CD8-positive, alpha-beta T cell (primary cell): ENCODE measurements at regions of chrX and their contacts with region 1.

Region 1: DNA sequence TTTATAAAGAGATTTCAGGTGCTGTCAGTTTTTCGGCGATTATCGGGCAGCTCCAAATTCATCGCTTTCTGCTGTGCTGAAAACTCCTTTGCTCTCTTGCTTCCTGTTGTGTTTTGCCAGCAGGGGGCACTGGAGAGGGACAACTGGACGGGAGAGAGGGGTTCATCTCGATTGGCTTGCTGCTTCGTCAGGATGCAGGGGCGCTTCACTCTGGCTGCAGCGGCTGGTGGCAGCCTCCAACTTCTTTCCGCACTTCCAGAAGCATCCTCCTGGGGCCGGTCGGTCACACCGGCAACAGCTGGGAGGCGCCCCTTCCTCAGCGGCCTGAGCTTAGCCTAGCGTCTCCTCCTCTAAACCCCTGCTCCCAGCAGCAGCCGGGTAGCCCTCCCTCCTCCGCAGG is 29.5 kb downstream of the MSL3 start:
- DNase-seq: peak; percentile 38 to 80 (median 66)
- ATAC-seq: peak; percentile 79
- H3K4me3 ChIP-seq: peak overlapping the region; percentile 34 to 35
- H3K4me3 Mint-ChIP-seq: peak overlapping the region; percentile 76
- H3K27ac ChIP-seq: no peak overlapping the region
- H3K27ac Mint-ChIP-seq: peak overlapping the region; percentile 60
- H3K4me1 ChIP-seq: peaks cover 19% of the 10 kb centered on the region
- H3K4me1 Mint-ChIP-seq: peaks cover 19% of the 10 kb centered on the region
- H3K27me3 ChIP-seq: no peaks in the 10 kb centered on the region
- H3K27me3 Mint-ChIP-seq: no peaks in the 10 kb centered on the region
- CTCF ChIP-seq: peak; percentile 46

Region 2: DNA sequence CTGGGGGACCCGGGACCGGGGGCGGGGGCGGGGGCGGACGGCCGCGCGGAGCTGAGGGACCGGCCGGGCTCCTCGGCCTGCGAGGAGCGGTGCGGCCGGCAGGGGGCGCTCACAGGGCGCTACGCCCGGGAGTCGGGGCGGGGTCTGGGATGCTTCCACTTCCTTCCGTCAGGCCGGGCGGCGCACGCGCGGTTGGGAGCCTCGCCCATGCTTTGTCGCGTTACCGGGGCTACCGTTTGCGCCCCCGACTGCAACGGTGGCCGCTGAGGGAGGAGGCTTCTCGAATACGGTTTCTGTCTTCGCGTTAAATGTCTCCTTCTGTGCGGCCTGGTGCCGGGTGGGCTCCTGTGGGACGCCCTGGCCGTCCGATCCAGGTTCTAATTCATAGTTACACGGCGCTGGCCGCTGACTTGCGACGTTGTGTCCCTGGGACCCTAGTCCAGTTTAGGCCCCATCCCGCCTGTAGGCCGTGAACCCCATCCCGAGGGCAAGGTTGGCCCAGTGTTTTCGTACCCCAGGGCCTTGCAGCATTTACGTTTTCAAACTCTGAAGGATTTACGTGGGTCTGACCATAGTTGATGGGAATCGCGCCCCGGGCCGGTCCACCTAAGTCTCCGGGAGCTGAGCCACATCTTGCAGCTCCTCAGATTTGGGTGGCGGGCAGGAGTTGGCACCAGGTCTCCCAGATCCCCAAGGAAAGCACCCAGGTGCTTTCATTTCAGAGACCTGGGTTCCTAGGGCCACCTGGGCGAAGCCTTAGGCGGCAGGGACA is 29.0 kb before region 1 on chrX:
- CTCF ChIA-PET with region 1: interaction called, 10 read pairs
- POLR2A ChIA-PET with region 1: no interaction called
- intact Hi-C with region 1: no loop called
- DNase-seq: peak; percentile 76 to 93 (median 89)
- ATAC-seq: peak; percentile 61
- H3K4me3 ChIP-seq: peak overlapping the region; percentile 76 to 91
- H3K4me3 Mint-ChIP-seq: peak overlapping the region; percentile 88
- H3K27ac ChIP-seq: peak overlapping the region; percentile 87 to 93
- H3K27ac Mint-ChIP-seq: peak overlapping the region; percentile 97
- H3K4me1 ChIP-seq: peaks cover 18% of the 10 kb centered on the region
- H3K4me1 Mint-ChIP-seq: peaks cover 34% of the 10 kb centered on the region
- H3K27me3 ChIP-seq: no peaks in the 10 kb centered on the region
- H3K27me3 Mint-ChIP-seq: no peaks in the 10 kb centered on the region
- CTCF ChIP-seq: peak; percentile 62

Region 3: GRCh38 chrX:11890836-11891514 is 103.4 kb after region 1 on chrX:
- CTCF ChIA-PET with region 1: no interaction called
- POLR2A ChIA-PET with region 1: no interaction called
- intact Hi-C with region 1: no loop called
- DNase-seq: no peak
- ATAC-seq: no peak
- H3K4me3 ChIP-seq: no peak overlapping the region
- H3K4me3 Mint-ChIP-seq: no peak overlapping the region
- H3K27ac ChIP-seq: no peak overlapping the region
- H3K27ac Mint-ChIP-seq: no peak overlapping the region
- H3K4me1 ChIP-seq: no peaks in the 10 kb centered on the region
- H3K4me1 Mint-ChIP-seq: no peaks in the 10 kb centered on the region
- H3K27me3 ChIP-seq: no peaks in the 10 kb centered on the region
- H3K27me3 Mint-ChIP-seq: peaks cover 2% of the 10 kb centered on the region
- CTCF ChIP-seq: no peak

Region 4: DNA sequence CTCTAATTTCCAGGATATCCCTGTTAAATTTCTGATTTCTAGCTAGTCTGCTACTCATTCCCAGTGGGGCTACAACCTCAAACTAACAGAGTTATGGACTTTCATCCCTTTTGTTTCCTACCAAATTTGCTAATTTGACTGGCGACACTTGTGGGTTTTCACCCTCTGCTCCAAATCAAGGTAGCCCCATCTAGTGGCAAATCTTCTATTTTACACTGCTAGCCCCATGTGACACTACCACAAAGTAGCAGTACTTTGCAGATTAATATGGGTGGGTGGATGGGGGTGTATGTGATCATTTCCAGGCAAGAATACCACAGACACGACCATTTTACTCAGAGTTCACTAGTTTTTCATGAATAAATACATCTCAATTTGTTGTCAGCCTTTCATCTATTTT is 120.8 kb after region 1 on chrX:
- CTCF ChIA-PET with region 1: interaction called, 16 read pairs
- POLR2A ChIA-PET with region 1: no interaction called
- intact Hi-C with region 1: loop called (anchors 1 to 2 kb)
- DNase-seq: peak in 2 of 9 experiments; percentile 22 to 54
- ATAC-seq: no peak
- H3K4me3 ChIP-seq: no peak overlapping the region
- H3K4me3 Mint-ChIP-seq: no peak overlapping the region
- H3K27ac ChIP-seq: no peak overlapping the region
- H3K27ac Mint-ChIP-seq: no peak overlapping the region
- H3K4me1 ChIP-seq: peaks cover 5% of the 10 kb centered on the region
- H3K4me1 Mint-ChIP-seq: peaks cover 3% of the 10 kb centered on the region
- H3K27me3 ChIP-seq: no peaks in the 10 kb centered on the region
- H3K27me3 Mint-ChIP-seq: peaks cover 2% of the 10 kb centered on the region
- CTCF ChIP-seq: peak; percentile 46

Region 5: GRCh38 chrX:12894074-12895030 is 1106.8 kb after region 1 on chrX:
- CTCF ChIA-PET with region 1: no interaction called
- POLR2A ChIA-PET with region 1: no interaction called
- intact Hi-C with region 1: loop called in 1 of 2 experiments (anchors 10 kb)
- DNase-seq: peak; percentile 4 to 64 (median 40)
- ATAC-seq: peak; percentile 49
- H3K4me3 ChIP-seq: no peak overlapping the region
- H3K4me3 Mint-ChIP-seq: no peak overlapping the region
- H3K27ac ChIP-seq: no peak overlapping the region
- H3K27ac Mint-ChIP-seq: peak overlapping the region; percentile 24
- H3K4me1 ChIP-seq: peaks cover 3% of the 10 kb centered on the region
- H3K4me1 Mint-ChIP-seq: peaks cover 25% of the 10 kb centered on the region
- H3K27me3 ChIP-seq: no peaks in the 10 kb centered on the region
- H3K27me3 Mint-ChIP-seq: no peaks in the 10 kb centered on the region
- CTCF ChIP-seq: peak; percentile 56